SK-N-SH (cell line): ENCODE measurements at regions of chr18 and their contacts with region 1.

Region 1: GRCh38 chr18:2536493-2536892 is 34.8 kb downstream of the METTL4 start:
- DNase-seq: no peak
- H3K4me3 ChIP-seq: no peak overlapping the region
- H3K27ac ChIP-seq: peak overlapping the region in 1 of 2 experiments; percentile 56; a peak in 2 of 4 replicates
- H3K4me1 ChIP-seq: peaks cover 0 to 22% of the 10 kb centered on the region in 2 experiments; a peak in 2 of 4 replicates
- H3K27me3 ChIP-seq: no peaks in the 10 kb centered on the region
- CTCF ChIP-seq: no peak
- EP300 ChIP-seq: no peak
- RAD21 ChIP-seq: no peak

Region 2: DNA sequence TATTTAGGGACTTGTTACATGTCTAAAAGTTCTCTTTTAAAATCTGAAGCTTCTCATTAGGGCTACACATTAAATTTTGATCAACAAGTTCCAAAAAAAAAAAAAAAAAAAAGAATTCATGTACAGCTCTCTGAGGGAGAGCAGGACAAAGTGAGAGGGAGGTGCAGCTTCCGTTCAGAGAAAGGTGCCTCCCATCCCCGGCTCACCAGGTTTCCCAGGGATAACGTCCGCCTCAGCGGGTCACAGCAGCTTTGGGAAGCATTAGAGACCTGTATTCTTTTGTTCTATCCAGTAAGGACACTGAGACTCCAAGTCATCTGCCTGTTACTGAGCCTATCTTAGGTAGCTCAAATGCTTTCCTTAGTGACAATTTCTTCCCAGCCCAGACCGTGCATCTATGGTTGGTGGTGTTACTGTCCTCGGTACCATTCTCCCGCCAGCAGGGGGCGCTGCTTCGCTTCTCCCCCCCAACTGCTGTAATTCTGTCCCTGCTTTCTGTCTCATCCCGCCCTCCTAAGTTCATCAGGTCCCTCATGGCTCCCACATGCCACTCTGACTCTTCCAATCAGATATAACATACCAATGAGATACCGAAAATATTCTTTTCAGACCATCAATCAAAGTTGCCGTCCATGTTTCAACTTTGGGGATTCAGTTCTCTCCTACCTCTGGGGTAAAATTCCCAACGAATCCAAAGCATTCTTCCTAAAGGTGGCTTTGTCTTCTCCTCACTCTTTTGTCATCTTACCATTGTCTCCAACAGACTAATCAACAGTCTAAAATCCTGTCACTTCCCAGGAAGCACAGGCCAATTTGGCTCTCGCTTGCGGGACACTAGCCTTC is 431.7 kb before region 1 on chr18:
- CTCF ChIA-PET with region 1: interaction called, 14 read pairs
- POLR2A ChIA-PET with region 1: no interaction called
- DNase-seq: peak; percentile 62
- H3K4me3 ChIP-seq: peak overlapping the region in 1 of 2 experiments; percentile 30; a peak in 2 of 4 replicates
- H3K27ac ChIP-seq: no peak overlapping the region
- H3K4me1 ChIP-seq: no peaks in the 10 kb centered on the region
- H3K27me3 ChIP-seq: no peaks in the 10 kb centered on the region
- CTCF ChIP-seq: peak; percentile 85
- EP300 ChIP-seq: no peak
- RAD21 ChIP-seq: peak; percentile 59

Region 3: DNA sequence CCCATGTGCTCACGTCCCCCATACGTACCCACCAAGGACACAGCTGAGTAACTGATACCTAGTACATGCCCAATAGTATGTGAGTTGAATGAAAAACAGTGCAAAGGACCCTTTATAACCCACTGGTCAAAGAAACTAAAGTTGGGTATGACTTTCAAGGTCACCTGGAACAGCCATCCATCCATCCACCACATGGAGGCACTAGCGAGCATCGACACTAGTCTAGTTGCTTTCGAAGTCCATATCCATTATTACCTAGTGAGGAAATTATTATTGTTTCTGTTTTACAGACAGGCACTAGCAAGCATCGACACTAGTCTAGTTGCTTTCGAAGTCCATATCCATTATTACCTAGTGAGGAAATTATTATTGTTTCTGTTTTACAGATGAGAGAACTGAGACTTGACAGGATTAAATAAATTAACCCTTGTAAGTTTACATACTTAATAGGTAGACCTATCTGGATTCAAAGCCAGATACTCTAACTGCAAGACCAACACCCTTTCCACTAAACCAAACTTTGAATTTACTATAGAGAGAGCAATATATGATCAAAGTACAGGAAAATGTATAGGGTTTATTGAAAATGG is 198.8 kb before region 1 on chr18:
- CTCF ChIA-PET with region 1: interaction called, 17 read pairs
- POLR2A ChIA-PET with region 1: no interaction called
- DNase-seq: peak; percentile 26
- H3K4me3 ChIP-seq: no peak overlapping the region
- H3K27ac ChIP-seq: no peak overlapping the region
- H3K4me1 ChIP-seq: no peaks in the 10 kb centered on the region
- H3K27me3 ChIP-seq: no peaks in the 10 kb centered on the region
- CTCF ChIP-seq: peak; percentile 65
- EP300 ChIP-seq: no peak
- RAD21 ChIP-seq: peak; percentile 52

Region 4: GRCh38 chr18:2547477-2548087 is 11.1 kb after region 1 on chr18:
- CTCF ChIA-PET with region 1: interaction called, 11 read pairs
- POLR2A ChIA-PET with region 1: no interaction called
- DNase-seq: peak; percentile 46
- H3K4me3 ChIP-seq: no peak overlapping the region
- H3K27ac ChIP-seq: no peak overlapping the region
- H3K4me1 ChIP-seq: no peaks in the 10 kb centered on the region
- H3K27me3 ChIP-seq: no peaks in the 10 kb centered on the region
- CTCF ChIP-seq: peak; percentile 79
- EP300 ChIP-seq: no peak
- RAD21 ChIP-seq: peak; percentile 74

Region 5: DNA sequence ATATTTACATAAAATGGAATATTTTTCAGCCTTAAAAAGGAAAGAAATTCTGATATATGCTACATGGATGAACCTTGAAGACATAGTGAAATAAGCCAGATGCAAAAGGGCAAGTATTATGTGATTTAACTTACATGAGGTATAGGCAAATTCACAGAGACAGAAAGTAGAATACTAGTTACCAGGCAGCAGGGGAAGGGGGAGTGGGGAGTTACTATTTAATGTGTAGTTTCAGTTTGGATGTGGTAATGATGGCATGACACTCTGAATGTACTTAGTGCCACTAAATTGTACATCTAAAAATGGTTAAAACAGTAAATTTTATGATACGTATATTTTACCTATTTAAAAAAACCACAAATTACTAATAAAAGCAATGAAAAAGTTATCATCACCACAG is 22.8 kb after region 1 on chr18:
- CTCF ChIA-PET with region 1: interaction called, 11 read pairs
- POLR2A ChIA-PET with region 1: no interaction called
- DNase-seq: no peak
- H3K4me3 ChIP-seq: no peak overlapping the region
- H3K27ac ChIP-seq: no peak overlapping the region
- H3K4me1 ChIP-seq: no peaks in the 10 kb centered on the region
- H3K27me3 ChIP-seq: no peaks in the 10 kb centered on the region
- CTCF ChIP-seq: no peak
- EP300 ChIP-seq: no peak
- RAD21 ChIP-seq: no peak

Region 6: GRCh38 chr18:2692508-2692907 is 156.0 kb after region 1 on chr18:
- CTCF ChIA-PET with region 1: no interaction called
- POLR2A ChIA-PET with region 1: no interaction called
- DNase-seq: no peak
- H3K4me3 ChIP-seq: no peak overlapping the region
- H3K27ac ChIP-seq: no peak overlapping the region
- H3K4me1 ChIP-seq: no peaks in the 10 kb centered on the region
- H3K27me3 ChIP-seq: no peaks in the 10 kb centered on the region
- CTCF ChIP-seq: no peak
- EP300 ChIP-seq: no peak
- RAD21 ChIP-seq: no peak